ENCODE measurements at regions of chr17 and their contacts with region 1.

Region 1: GRCh38 chr17:27353461-27354050 is 59.6 kb downstream of the WSB1 start:
- DNase-seq: peak; percentile 97
- ATAC-seq: peak; percentile 92
- H3K4me3 ChIP-seq: peak overlapping the region; percentile 79
- H3K27ac ChIP-seq: peak overlapping the region; percentile 98
- H3K4me1 ChIP-seq: peaks cover 33 to 35% of the 10 kb centered on the region in 2 experiments
- H3K27me3 ChIP-seq: no peaks in the 10 kb centered on the region
- CTCF ChIP-seq: peak; percentile 82 to 97 (median 93)
- EP300 ChIP-seq: peak; percentile 81
- POLR2A ChIP-seq: peak; percentile 91
- RAD21 ChIP-seq: peak; percentile 97

Region 2: GRCh38 chr17:27009087-27009486 is 344.5 kb before region 1 on chr17:
- CTCF ChIA-PET with region 1: no interaction called
- POLR2A ChIA-PET with region 1: no interaction called
- in situ Hi-C with region 1: no loop called
- intact Hi-C with region 1: no loop called
- DNase-seq: no peak
- ATAC-seq: no peak
- H3K4me3 ChIP-seq: no peak overlapping the region
- H3K27ac ChIP-seq: no peak overlapping the region
- H3K4me1 ChIP-seq: no peaks in the 10 kb centered on the region
- H3K27me3 ChIP-seq: no peaks in the 10 kb centered on the region
- CTCF ChIP-seq: no peak
- EP300 ChIP-seq: no peak
- POLR2A ChIP-seq: no peak
- RAD21 ChIP-seq: no peak

Region 3: DNA sequence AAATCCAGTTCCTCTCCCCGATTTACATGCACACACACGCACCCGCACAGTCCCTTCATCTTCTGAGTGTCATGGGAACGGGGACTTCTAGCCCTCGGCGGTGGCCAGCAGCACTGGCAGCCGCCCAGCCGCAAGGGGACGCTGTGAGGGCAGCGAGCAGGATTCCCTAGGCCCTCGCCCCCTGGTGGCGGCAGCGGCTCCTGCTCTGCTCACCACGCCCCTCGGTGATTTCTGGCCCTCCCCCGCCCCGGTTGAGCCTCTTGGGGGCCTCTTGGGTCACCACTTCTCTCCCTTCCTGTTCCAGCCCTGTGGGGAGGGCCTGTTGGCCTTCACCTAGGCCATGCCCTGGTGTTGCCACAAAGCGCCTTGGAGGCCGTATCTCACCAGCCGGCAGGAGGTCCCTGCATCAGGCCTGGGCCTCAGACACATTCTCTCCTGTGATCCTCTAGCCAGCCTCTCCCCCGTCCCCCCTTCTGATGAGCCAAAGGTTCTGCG is 27.5 kb after region 1 on chr17:
- CTCF ChIA-PET with region 1: interaction called, 4 read pairs
- POLR2A ChIA-PET with region 1: no interaction called
- in situ Hi-C with region 1: no loop called
- intact Hi-C with region 1: loop called (anchors 2 kb)
- DNase-seq: peak; percentile 93 to 95 (median 94)
- ATAC-seq: peak; percentile 94
- H3K4me3 ChIP-seq: no peak overlapping the region
- H3K27ac ChIP-seq: peak overlapping the region; percentile 39; the same call in 1 of the 3 replicates
- H3K4me1 ChIP-seq: peaks cover 26 to 30% of the 10 kb centered on the region in 2 experiments
- H3K27me3 ChIP-seq: no peaks in the 10 kb centered on the region
- CTCF ChIP-seq: peak; percentile 100
- EP300 ChIP-seq: peak; percentile 69
- POLR2A ChIP-seq: no peak
- RAD21 ChIP-seq: peak; percentile 92 to 98

Region 4: GRCh38 chr17:27544350-27545131 is 191.0 kb after region 1 on chr17:
- CTCF ChIA-PET with region 1: no interaction called
- POLR2A ChIA-PET with region 1: no interaction called
- in situ Hi-C with region 1: no loop called
- intact Hi-C with region 1: loop called (anchors 10 kb)
- DNase-seq: peak; percentile 59 to 87 (median 74)
- ATAC-seq: peak; percentile 75
- H3K4me3 ChIP-seq: no peak overlapping the region
- H3K27ac ChIP-seq: peak overlapping the region; percentile 49; the same call in 1 of the 3 replicates
- H3K4me1 ChIP-seq: peaks cover 55 to 63% of the 10 kb centered on the region in 2 experiments
- H3K27me3 ChIP-seq: no peaks in the 10 kb centered on the region
- CTCF ChIP-seq: peak; percentile 20 to 23 (median 21); a peak in 2 of 6 replicates
- EP300 ChIP-seq: peak; percentile 80
- POLR2A ChIP-seq: no peak
- RAD21 ChIP-seq: peak; percentile 25 to 43

Measured in K562 (cell line).